Dorsolateral prefrontal cortex (tissue), 120 donors: ENCODE measurements at regions of chr12 and their contacts with region 1.

Region 1: GRCh38 chr12:114166362-114166761 is 200.2 kb upstream of the RBM19 start:
- DNase-seq: peak in 9 of 10 donors; percentile 19 to 71 (median 44)
- H3K4me3 ChIP-seq: no peak overlapping the region
- H3K27ac ChIP-seq: no peak overlapping the region
- H3K27me3 ChIP-seq: peaks cover 0 to 40% (median 5%) of the 10 kb centered on the region in 45 donors
- CTCF ChIP-seq: peak; percentile 41 to 88 (median 76)

Region 2: DNA sequence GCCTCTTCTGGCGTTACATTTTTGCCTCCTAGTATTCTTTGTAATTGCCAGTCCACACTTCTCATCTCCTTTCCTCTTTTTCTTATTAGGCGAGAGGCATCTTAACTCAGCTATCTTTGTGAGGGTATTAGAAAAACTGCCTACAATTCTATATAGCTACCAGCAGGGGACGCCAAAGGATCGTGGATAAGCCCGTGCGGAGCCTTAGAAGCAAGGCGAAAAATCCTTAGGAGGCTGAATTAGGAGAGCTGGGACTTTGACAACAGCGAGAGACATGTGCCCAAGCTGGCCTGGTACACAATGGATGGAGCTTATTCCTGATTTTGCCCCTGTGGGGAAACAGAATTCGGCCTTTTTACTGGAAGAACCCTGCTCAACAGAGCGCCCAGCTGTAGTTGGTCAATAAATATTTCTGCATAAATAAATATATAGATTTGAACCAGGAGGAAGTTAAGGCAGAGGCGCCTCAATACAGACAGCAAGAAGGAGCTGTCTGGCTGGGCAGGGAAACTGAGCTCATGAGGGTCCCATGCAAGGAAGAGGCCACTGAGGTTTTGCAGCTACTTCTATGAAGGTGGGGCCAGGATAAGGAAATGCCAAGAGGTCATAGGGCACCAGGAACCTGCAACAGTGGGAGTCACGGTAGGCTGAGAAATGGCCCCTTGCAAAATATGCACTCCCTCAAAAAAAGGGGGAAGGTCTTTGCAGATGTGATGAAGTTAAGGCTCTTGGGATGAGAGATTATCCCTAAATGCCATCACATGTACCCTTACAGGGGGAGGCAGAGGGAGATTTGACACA is 185.6 kb before region 1 on chr12:
- intact Hi-C with region 1: loop called (anchors 10 kb)
- DNase-seq: peak in 7 of 10 donors; percentile 15 to 56 (median 27)
- H3K4me3 ChIP-seq: no peak overlapping the region
- H3K27ac ChIP-seq: no peak overlapping the region
- H3K27me3 ChIP-seq: peaks cover 0 to 39% (median 14%) of the 10 kb centered on the region in 45 donors
- CTCF ChIP-seq: peak; percentile 80 to 99 (median 95)

Region 3: GRCh38 chr12:114368685-114369452 is 202.5 kb after region 1 on chr12:
- intact Hi-C with region 1: loop called in 1 of 2 experiments (anchors 5 kb)
- DNase-seq: no peak
- H3K4me3 ChIP-seq: no peak overlapping the region
- H3K27ac ChIP-seq: peak overlapping the region in 9 of 59 donors; percentile 5 to 42 (median 29)
- H3K27me3 ChIP-seq: peaks cover 0 to 27% (median 0%) of the 10 kb centered on the region in 45 donors
- CTCF ChIP-seq: no peak

Region 4: DNA sequence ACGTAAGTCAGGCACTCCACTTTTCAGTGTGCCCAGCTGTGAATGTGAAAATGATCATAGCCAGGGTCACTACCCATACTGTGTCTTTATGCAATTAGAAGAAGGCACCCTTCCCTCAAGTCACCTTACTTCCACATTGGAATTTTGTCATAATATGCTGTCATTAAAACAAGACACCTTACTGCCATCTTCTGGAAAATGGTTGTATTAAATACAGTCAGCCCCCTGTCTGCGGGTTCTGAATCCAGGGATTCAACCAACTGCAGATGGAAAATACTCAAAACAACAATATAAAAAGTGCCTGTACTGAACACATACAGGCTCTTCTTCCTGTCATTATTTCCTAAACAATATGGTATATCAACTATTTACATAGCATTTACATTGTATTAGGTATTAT is 309.8 kb after region 1 on chr12:
- intact Hi-C with region 1: loop called (anchors 5 to 10 kb)
- DNase-seq: no peak
- H3K4me3 ChIP-seq: no peak overlapping the region
- H3K27ac ChIP-seq: no peak overlapping the region
- H3K27me3 ChIP-seq: peaks cover 10 to 73% (median 59%) of the 10 kb centered on the region in 45 donors
- CTCF ChIP-seq: peak in 53 of 56 donors; percentile 25 to 75 (median 57)

Region 5: DNA sequence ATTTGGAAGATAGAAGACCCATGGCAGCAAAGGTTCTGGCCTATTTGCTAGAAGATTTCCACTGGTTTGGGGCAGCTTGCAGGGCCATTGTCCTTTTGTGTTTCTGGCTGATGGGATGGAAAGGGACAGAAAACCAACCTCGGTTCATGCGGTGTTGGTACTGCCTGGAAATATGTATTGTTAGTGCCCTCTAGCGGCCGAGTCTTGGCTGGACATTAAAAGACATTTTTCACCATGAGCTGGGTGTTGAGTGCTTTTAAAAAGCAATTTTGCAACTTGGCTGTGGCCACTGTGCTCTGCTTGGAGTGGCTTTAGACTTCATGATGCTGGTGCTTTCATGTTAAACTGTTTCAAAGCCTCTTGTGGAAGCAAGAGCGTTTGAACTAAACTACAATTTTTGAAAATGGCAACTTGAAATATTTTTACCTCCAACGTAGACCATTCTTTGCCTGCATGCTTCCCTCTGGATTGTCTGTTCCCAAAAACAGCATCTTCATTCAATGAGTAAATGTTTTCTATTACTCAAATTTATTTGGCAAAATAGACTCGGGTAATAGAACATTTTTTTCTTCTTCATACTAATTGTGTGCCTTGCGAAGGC is 342.3 kb after region 1 on chr12:
- intact Hi-C with region 1: loop called (anchors 2 to 10 kb)
- DNase-seq: peak; percentile 33 to 88 (median 60)
- H3K4me3 ChIP-seq: no peak overlapping the region
- H3K27ac ChIP-seq: no peak overlapping the region
- H3K27me3 ChIP-seq: peaks cover 0 to 60% (median 16%) of the 10 kb centered on the region in 45 donors
- CTCF ChIP-seq: peak; percentile 63 to 90 (median 84)